CD4-positive, alpha-beta memory T cell (primary cell): ENCODE measurements at regions of chr5 and their contacts with region 1.

Region 1: GRCh38 chr5:38420691-38421390 is 135.6 kb downstream of the LIFR start:
- DNase-seq: peak in 1 of 5 donors; percentile 14
- H3K4me3 ChIP-seq: no peak overlapping the region
- H3K4me3 Mint-ChIP-seq: no peak overlapping the region
- H3K27ac ChIP-seq: no peak overlapping the region
- H3K27ac Mint-ChIP-seq: no peak overlapping the region
- H3K4me1 ChIP-seq: no peaks in the 10 kb centered on the region
- H3K4me1 Mint-ChIP-seq: no peaks in the 10 kb centered on the region
- H3K27me3 ChIP-seq: no peaks in the 10 kb centered on the region
- H3K27me3 Mint-ChIP-seq: peaks cover 9 to 14% of the 10 kb centered on the region in 2 donors

Region 2: DNA sequence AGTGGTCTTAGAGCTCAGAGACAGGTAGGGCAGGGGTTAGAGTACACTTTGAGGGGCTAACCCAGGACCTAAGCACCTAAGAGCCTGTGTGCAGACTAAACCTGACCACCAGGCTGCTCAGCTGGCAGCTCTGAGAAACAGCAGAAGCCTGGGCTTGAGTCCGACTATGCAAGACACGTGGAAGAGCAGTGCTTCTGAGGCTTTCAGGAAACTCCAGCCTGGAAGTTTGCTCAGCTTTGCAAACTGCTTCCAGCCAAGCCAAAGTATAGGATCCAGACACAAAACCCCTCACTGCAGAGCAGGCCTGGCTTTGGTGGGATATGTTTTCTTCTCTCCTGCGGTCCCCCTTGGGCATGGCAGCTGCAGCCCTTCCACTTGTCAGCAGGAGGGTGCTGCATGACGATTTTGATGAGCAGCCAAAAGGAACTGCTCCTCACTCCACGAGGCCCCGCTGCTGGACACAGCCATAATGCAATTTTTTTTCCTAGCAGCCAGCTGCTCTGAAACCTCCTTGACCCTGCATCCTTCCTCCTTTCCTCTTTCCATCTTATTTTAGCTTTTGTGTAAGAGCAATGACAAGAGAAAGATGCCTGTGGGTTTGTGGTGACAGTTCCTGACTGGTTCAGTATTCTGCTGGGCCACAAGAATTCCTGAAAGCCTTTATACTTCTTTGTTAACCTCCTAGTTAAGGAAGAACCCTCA is 12.5 kb after region 1 on chr5:
- CTCF ChIA-PET with region 1: interaction called, 13 read pairs
- POLR2A ChIA-PET with region 1: no interaction called
- intact Hi-C with region 1: no loop called
- DNase-seq: no peak
- H3K4me3 ChIP-seq: no peak overlapping the region
- H3K4me3 Mint-ChIP-seq: no peak overlapping the region
- H3K27ac ChIP-seq: no peak overlapping the region
- H3K27ac Mint-ChIP-seq: no peak overlapping the region
- H3K4me1 ChIP-seq: no peaks in the 10 kb centered on the region
- H3K4me1 Mint-ChIP-seq: peaks cover 0 to 3% (median 0%) of the 10 kb centered on the region in 4 donors
- H3K27me3 ChIP-seq: peaks cover 3% of the 10 kb centered on the region
- H3K27me3 Mint-ChIP-seq: peaks cover 18 to 20% of the 10 kb centered on the region in 2 donors

Region 3: DNA sequence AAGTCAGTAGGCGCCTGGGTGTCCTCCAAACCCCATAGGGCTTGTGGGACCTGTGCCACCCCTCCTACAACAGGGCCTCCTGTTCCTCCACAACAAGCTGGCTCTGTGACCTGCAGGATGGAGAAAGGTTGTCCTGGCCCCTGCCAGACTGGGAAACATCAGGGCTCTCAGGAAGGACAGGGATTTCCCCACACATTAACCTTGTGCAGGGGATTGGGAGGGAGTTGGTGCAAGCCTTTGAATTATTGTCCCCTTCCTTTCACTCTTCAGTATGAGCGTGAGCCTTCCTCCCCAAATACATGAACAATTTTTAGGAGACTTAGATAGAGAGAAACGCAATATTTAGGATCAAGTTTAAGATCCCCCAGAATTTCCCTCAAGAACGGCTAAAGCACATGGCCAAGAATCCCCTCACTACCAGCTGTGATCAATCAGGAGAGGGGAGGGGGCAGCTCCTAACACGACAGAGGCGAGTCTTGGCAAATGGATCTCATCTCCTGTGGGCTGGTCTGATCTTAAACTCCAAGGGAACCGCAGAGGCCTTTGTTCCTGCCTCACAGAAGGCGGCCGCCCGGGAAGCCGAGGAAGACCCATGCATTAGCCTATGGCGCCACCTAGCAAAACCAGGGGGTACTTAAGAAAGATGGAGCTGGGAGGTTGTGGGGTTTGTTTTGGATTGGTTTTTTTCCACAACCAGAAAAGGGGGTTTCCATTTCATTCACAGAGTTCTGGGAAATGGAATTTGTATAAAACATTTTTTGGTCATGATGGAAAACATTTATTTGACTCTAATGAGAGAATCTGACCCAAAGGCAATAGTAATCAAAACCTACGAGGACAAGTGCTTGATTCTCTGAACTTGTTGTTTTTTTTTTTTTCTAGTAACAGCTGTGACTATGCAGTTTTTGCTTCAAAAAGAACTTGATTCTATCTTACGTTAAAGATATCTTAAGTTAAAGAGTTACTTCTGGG is 388.8 kb after region 1 on chr5:
- CTCF ChIA-PET with region 1: interaction called, 24 read pairs
- POLR2A ChIA-PET with region 1: no interaction called
- intact Hi-C with region 1: no loop called
- DNase-seq: peak; percentile 21 to 38 (median 25)
- H3K4me3 ChIP-seq: no peak overlapping the region
- H3K4me3 Mint-ChIP-seq: no peak overlapping the region
- H3K27ac ChIP-seq: no peak overlapping the region
- H3K27ac Mint-ChIP-seq: no peak overlapping the region
- H3K4me1 ChIP-seq: no peaks in the 10 kb centered on the region
- H3K4me1 Mint-ChIP-seq: peaks cover 0 to 3% (median 0%) of the 10 kb centered on the region in 4 donors
- H3K27me3 ChIP-seq: no peaks in the 10 kb centered on the region
- H3K27me3 Mint-ChIP-seq: peaks cover 12 to 19% of the 10 kb centered on the region in 2 donors